CD4-positive, alpha-beta T cell (primary cell): ENCODE measurements at regions of chr3 and their contacts with region 1.

Region 1: GRCh38 chr3:176872771-176873209 is 324.5 kb downstream of the TBL1XR1 start:
- DNase-seq: peak; percentile 19 to 73 (median 40)
- ATAC-seq: peak; percentile 90
- H3K4me3 ChIP-seq: no peak overlapping the region
- H3K4me3 Mint-ChIP-seq: no peak overlapping the region
- H3K27ac ChIP-seq: no peak overlapping the region
- H3K27ac Mint-ChIP-seq: no peak overlapping the region
- H3K4me1 ChIP-seq: peaks cover 6% of the 10 kb centered on the region
- H3K4me1 Mint-ChIP-seq: peaks cover 8% of the 10 kb centered on the region
- H3K27me3 ChIP-seq: peaks cover 0 to 2% of the 10 kb centered on the region in 2 experiments
- H3K27me3 Mint-ChIP-seq: no peaks in the 10 kb centered on the region
- CTCF ChIP-seq: peak; percentile 69

Region 2: GRCh38 chr3:176796371-176796770 is 76.4 kb before region 1 on chr3:
- CTCF ChIA-PET with region 1: no interaction called
- POLR2A ChIA-PET with region 1: no interaction called
- intact Hi-C with region 1: no loop called
- DNase-seq: no peak
- ATAC-seq: no peak
- H3K4me3 ChIP-seq: no peak overlapping the region
- H3K4me3 Mint-ChIP-seq: no peak overlapping the region
- H3K27ac ChIP-seq: no peak overlapping the region
- H3K27ac Mint-ChIP-seq: no peak overlapping the region
- H3K4me1 ChIP-seq: no peaks in the 10 kb centered on the region
- H3K4me1 Mint-ChIP-seq: no peaks in the 10 kb centered on the region
- H3K27me3 ChIP-seq: no peaks in the 10 kb centered on the region
- H3K27me3 Mint-ChIP-seq: peaks cover 24% of the 10 kb centered on the region
- CTCF ChIP-seq: no peak

Region 3: GRCh38 chr3:176939022-176939817 is 66.4 kb after region 1 on chr3:
- CTCF ChIA-PET with region 1: interaction called, 6 read pairs
- POLR2A ChIA-PET with region 1: no interaction called
- intact Hi-C with region 1: loop called (anchors 2 kb)
- DNase-seq: peak in 8 of 14 experiments; percentile 0 to 64 (median 14)
- ATAC-seq: peak; percentile 52
- H3K4me3 ChIP-seq: no peak overlapping the region
- H3K4me3 Mint-ChIP-seq: no peak overlapping the region
- H3K27ac ChIP-seq: no peak overlapping the region
- H3K27ac Mint-ChIP-seq: no peak overlapping the region
- H3K4me1 ChIP-seq: no peaks in the 10 kb centered on the region
- H3K4me1 Mint-ChIP-seq: no peaks in the 10 kb centered on the region
- H3K27me3 ChIP-seq: no peaks in the 10 kb centered on the region
- H3K27me3 Mint-ChIP-seq: no peaks in the 10 kb centered on the region
- CTCF ChIP-seq: peak; percentile 81

Region 4: DNA sequence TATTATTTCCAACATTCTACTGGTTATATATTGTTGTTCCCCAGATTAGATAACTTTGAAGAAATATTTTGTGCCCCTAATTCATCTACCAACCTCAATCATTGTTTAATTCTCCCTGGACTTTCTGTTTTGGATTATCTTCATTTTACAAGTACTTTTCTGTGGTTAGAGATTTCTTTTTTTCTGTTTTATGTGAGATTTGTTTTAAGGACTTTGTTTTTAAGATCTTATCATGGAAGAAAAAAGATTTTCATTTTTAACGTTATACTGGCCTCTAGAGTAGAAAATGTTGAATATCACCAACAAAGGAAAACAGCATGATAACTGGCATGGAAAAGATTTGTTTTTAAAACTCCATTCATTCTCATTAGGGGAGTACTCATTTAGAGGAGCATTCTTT is 1452.5 kb after region 1 on chr3:
- CTCF ChIA-PET with region 1: no interaction called
- POLR2A ChIA-PET with region 1: no interaction called
- intact Hi-C with region 1: loop called (anchors 5 kb)
- DNase-seq: peak in 1 of 14 experiments; percentile 22
- ATAC-seq: no peak
- H3K4me3 ChIP-seq: no peak overlapping the region
- H3K4me3 Mint-ChIP-seq: no peak overlapping the region
- H3K27ac ChIP-seq: no peak overlapping the region
- H3K27ac Mint-ChIP-seq: no peak overlapping the region
- H3K4me1 ChIP-seq: no peaks in the 10 kb centered on the region
- H3K4me1 Mint-ChIP-seq: no peaks in the 10 kb centered on the region
- H3K27me3 ChIP-seq: no peaks in the 10 kb centered on the region
- H3K27me3 Mint-ChIP-seq: no peaks in the 10 kb centered on the region
- CTCF ChIP-seq: no peak

Region 5: GRCh38 chr3:178385280-178385952 is 1512.6 kb after region 1 on chr3:
- CTCF ChIA-PET with region 1: interaction called, 15 read pairs
- POLR2A ChIA-PET with region 1: interaction called, 6 read pairs
- intact Hi-C with region 1: loop called in 1 of 2 experiments (anchors 2 kb)
- DNase-seq: peak in 4 of 14 experiments; percentile 8 to 47 (median 38)
- ATAC-seq: peak; percentile 44
- H3K4me3 ChIP-seq: no peak overlapping the region
- H3K4me3 Mint-ChIP-seq: no peak overlapping the region
- H3K27ac ChIP-seq: no peak overlapping the region
- H3K27ac Mint-ChIP-seq: no peak overlapping the region
- H3K4me1 ChIP-seq: no peaks in the 10 kb centered on the region
- H3K4me1 Mint-ChIP-seq: no peaks in the 10 kb centered on the region
- H3K27me3 ChIP-seq: no peaks in the 10 kb centered on the region
- H3K27me3 Mint-ChIP-seq: peaks cover 24% of the 10 kb centered on the region
- CTCF ChIP-seq: peak; percentile 76